PC-3 (cell line): ENCODE measurements at regions of chr19 and their contacts with region 1.

Region 1: DNA sequence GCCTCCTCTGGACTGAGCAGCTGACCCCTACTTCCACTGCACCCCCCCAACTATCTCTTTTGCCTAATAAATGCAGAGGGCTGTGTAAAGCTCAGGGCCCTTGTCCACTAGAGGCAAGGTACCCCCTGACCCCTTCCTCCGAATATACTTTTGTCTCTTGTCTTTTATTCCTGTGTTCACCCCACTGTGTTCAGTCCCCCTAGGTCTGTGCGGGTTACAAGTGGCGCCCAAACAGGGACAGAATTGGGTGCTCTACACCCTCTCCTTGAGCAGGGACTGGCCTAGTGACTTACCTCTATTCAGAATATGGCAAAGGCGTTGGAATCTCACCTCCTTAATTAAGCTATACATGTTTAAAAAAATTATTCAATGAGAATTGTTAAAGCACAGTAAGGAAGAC is 15.0 kb downstream of the ZNF350 start:
- DNase-seq: no peak
- ATAC-seq: no peak
- H3K4me3 ChIP-seq: no peak overlapping the region
- H3K27ac ChIP-seq: no peak overlapping the region
- H3K4me1 ChIP-seq: no peaks in the 10 kb centered on the region
- H3K27me3 ChIP-seq: no peaks in the 10 kb centered on the region
- CTCF ChIP-seq: no peak

Region 2: GRCh38 chr19:52007806-52008557 is 36.4 kb after region 1 on chr19 and contains the start of gene ZNF615:
- CTCF ChIA-PET with region 1: no interaction called
- POLR2A ChIA-PET with region 1: no interaction called
- intact Hi-C with region 1: loop called (anchors 1 kb)
- DNase-seq: peak; percentile 85
- ATAC-seq: peak; percentile 90
- H3K4me3 ChIP-seq: peak within 1 kb of the TSS; percentile 80
- H3K27ac ChIP-seq: no peak within 1 kb of the TSS; the same call in 1 of the 2 replicates
- H3K4me1 ChIP-seq: no peaks in the 10 kb centered on the region
- H3K27me3 ChIP-seq: no peaks in the 10 kb centered on the region
- CTCF ChIP-seq: no peak
- total RNA-seq, gene ZNF615: 5.4 and 5.5 TPM in 2 replicates